Left lung (tissue), 14 donors: ENCODE measurements at regions of chr20 and their contacts with region 1.

Region 1: GRCh38 chr20:19995220-19995863 is 21.8 kb upstream of the NAA20 start:
- DNase-seq: peak in 2 of 4 donors; percentile 56 to 71
- ATAC-seq: peak; percentile 70
- H3K4me3 ChIP-seq: no peak overlapping the region
- H3K27ac ChIP-seq: peak overlapping the region in 1 of 2 donors; percentile 25
- H3K4me1 ChIP-seq: peaks cover 25 to 91% of the 10 kb centered on the region in 2 donors
- H3K27me3 ChIP-seq: no peaks in the 10 kb centered on the region
- CTCF ChIP-seq: peak; percentile 57 to 72

Region 2: DNA sequence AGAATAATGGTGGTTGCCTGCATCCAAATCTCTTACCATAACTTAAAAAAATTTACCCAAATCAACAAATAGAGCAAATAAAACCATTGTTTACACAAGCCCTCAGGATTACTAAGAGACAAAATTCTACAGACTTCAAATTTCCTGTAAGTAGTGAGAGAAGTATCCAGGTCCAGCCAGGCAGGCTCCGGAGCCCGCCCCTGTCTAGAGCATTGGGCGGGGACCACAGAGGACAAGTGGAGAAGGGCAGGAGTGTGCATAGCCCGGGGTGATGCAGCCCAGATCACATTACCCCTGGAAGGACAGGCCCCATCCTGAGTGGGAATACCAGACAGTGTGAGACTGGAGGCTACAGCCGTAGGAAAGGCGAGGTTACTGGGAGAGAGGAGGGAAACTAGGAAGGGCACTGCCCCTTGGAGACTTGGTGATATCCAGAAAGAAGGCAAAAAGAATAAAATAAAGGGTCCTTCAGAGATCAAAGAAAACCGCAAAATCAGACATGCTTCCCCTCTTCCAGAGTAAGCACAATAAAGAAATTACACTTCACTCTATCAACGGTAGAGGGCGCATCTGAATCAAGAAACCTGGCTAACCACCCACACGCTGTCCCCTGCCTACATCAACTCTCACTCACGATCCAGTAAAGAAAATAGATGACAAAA is 210.7 kb before region 1 on chr20:
- intact Hi-C with region 1: loop called (anchors 10 kb)
- DNase-seq: peak; percentile 71 to 83 (median 80)
- ATAC-seq: peak; percentile 94
- H3K4me3 ChIP-seq: no peak overlapping the region
- H3K27ac ChIP-seq: peak overlapping the region; percentile 48 to 69
- H3K4me1 ChIP-seq: peaks cover 25 to 36% of the 10 kb centered on the region in 2 donors
- H3K27me3 ChIP-seq: no peaks in the 10 kb centered on the region
- CTCF ChIP-seq: peak; percentile 59 to 68

Region 3: GRCh38 chr20:19903168-19903811 is 92.1 kb before region 1 on chr20:
- intact Hi-C with region 1: loop called in 1 of 2 experiments (anchors 10 kb)
- DNase-seq: peak in 2 of 4 donors; percentile 64 to 85
- ATAC-seq: peak; percentile 65
- H3K4me3 ChIP-seq: no peak overlapping the region
- H3K27ac ChIP-seq: peak overlapping the region in 1 of 2 donors; percentile 73
- H3K4me1 ChIP-seq: peaks cover 0 to 48% of the 10 kb centered on the region in 2 donors
- H3K27me3 ChIP-seq: no peaks in the 10 kb centered on the region
- CTCF ChIP-seq: peak; percentile 11 to 27

Region 4: GRCh38 chr20:20546402-20546801 is 551.1 kb after region 1 on chr20:
- intact Hi-C with region 1: no loop called
- DNase-seq: no peak
- ATAC-seq: no peak
- H3K4me3 ChIP-seq: no peak overlapping the region
- H3K27ac ChIP-seq: no peak overlapping the region
- H3K4me1 ChIP-seq: no peaks in the 10 kb centered on the region
- H3K27me3 ChIP-seq: no peaks in the 10 kb centered on the region
- CTCF ChIP-seq: no peak